Panc1 (cell line): ENCODE measurements at regions of chr5 and their contacts with region 1.

Region 1: GRCh38 chr5:76942581-76942980 is 10.3 kb upstream of the CRHBP start:
- DNase-seq: no peak
- ATAC-seq: peak; percentile 38; the same call in 1 of the 2 replicates
- H3K4me3 ChIP-seq: no peak overlapping the region
- H3K27ac ChIP-seq: no peak overlapping the region
- H3K4me1 ChIP-seq: no peaks in the 10 kb centered on the region
- H3K27me3 ChIP-seq: no peaks in the 10 kb centered on the region
- CTCF ChIP-seq: no peak

Region 2: GRCh38 chr5:76918539-76918938 is 24.0 kb before region 1 on chr5:
- CTCF ChIA-PET with region 1: no interaction called
- POLR2A ChIA-PET with region 1: interaction called, 22 read pairs
- in situ Hi-C with region 1: no loop called
- intact Hi-C with region 1: no loop called
- DNase-seq: no peak
- ATAC-seq: no peak
- H3K4me3 ChIP-seq: no peak overlapping the region
- H3K27ac ChIP-seq: no peak overlapping the region
- H3K4me1 ChIP-seq: no peaks in the 10 kb centered on the region
- H3K27me3 ChIP-seq: no peaks in the 10 kb centered on the region; the same call in 1 of the 2 replicates
- CTCF ChIP-seq: no peak